Esophagus squamous epithelium (tissue), 5 donors: ENCODE measurements at regions of chr19 and their contacts with region 1.

Region 1: GRCh38 chr19:13604902-13605586 is 98.8 kb upstream of the CACNA1A start:
- DNase-seq: no peak
- H3K4me3 ChIP-seq: no peak overlapping the region
- H3K27ac ChIP-seq: no peak overlapping the region
- H3K4me1 ChIP-seq: no peaks in the 10 kb centered on the region
- H3K27me3 ChIP-seq: peaks cover 0 to 11% (median 0%) of the 10 kb centered on the region in 4 donors
- CTCF ChIP-seq: no peak
- POLR2A ChIP-seq: no peak

Region 2: GRCh38 chr19:13718733-13719132 is 113.7 kb after region 1 on chr19:
- intact Hi-C with region 1: loop called (anchors 5 kb)
- DNase-seq: no peak
- H3K4me3 ChIP-seq: no peak overlapping the region
- H3K27ac ChIP-seq: no peak overlapping the region
- H3K4me1 ChIP-seq: no peaks in the 10 kb centered on the region
- H3K27me3 ChIP-seq: peaks cover 0 to 5% (median 0%) of the 10 kb centered on the region in 4 donors
- CTCF ChIP-seq: peak in 2 of 6 experiments; percentile 11 to 53
- POLR2A ChIP-seq: no peak